ENCODE measurements at regions of chr14 and their contacts with region 1.

Region 1: DNA sequence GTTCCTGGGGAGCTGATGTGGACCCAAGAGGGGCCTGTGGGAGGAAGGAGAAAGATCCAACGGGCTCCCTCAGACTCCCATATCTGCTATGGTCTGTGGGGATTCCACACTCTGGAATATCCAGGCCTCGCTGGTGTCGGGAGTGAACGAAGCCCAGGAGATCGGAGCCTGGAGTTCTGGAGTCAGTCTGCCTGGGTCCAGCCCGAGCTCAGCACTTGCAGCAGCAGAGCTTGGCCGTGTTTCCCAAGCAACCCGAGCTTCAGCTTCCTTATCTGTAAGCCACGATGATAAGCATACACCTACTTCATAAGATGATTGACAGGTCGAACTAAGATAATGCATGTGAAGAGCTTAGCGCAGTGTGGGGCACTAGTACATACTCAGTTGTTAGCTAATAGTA is 10.1 kb downstream of the LTBP2 start:
- DNase-seq: no peak
- H3K4me3 Mint-ChIP-seq: no peak overlapping the region
- H3K27ac Mint-ChIP-seq: no peak overlapping the region
- H3K4me1 Mint-ChIP-seq: peaks cover 3% of the 10 kb centered on the region
- H3K27me3 Mint-ChIP-seq: no peaks in the 10 kb centered on the region

Region 2: DNA sequence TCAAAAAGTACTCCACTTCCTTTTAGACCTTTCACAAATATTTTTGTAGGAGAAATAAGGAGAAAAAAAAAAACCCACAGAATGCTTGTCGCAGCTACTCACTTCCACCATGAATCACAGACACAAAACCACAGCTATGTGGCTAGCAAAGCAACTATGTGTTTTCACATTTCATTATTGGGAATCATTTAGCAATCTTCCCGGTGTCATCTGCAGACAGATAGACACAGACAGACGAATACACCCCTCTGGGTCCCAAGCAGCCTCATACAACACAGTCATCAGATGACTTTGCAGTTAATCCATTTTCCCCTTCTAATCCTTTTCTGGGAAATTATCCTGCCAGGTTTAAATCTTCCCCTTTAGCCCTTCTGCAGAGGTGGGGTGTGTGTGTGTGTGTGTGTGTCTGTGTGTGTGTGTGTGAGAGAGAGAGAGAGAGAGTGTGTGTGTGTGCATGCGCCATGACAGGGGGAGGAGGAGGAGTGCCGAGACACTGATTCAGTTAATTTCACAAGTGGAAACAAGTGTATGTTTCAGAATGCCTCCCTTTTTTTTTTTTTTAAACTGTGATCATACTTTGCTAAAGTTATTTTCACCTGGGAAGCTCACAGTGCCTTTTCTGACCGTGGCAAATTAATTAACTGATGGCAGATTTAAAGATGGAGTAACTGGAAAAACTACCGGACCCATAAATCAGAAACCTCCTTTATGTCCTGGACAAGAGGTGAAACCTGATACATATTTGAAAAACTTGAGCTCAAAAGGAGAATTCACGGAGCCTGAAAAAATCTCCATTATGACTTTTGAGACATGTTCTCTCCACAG is 29.9 kb before region 1 on chr14:
- CTCF ChIA-PET with region 1: interaction called, 3 read pairs
- intact Hi-C with region 1: loop called (anchors 1 kb)
- DNase-seq: peak; percentile 54
- H3K4me3 Mint-ChIP-seq: peak overlapping the region; percentile 39
- H3K27ac Mint-ChIP-seq: peak overlapping the region; percentile 87
- H3K4me1 Mint-ChIP-seq: peaks cover 26% of the 10 kb centered on the region
- H3K27me3 Mint-ChIP-seq: peaks cover 11% of the 10 kb centered on the region

Measured in activated naive CD4-positive, alpha-beta T cell treated with anti-CD3 and anti-CD28 coated beads for 36 hours (primary cell).